Endothelial cell of umbilical vein (primary cell): ENCODE measurements at regions of chr4 and their contacts with region 1.

Region 1: DNA sequence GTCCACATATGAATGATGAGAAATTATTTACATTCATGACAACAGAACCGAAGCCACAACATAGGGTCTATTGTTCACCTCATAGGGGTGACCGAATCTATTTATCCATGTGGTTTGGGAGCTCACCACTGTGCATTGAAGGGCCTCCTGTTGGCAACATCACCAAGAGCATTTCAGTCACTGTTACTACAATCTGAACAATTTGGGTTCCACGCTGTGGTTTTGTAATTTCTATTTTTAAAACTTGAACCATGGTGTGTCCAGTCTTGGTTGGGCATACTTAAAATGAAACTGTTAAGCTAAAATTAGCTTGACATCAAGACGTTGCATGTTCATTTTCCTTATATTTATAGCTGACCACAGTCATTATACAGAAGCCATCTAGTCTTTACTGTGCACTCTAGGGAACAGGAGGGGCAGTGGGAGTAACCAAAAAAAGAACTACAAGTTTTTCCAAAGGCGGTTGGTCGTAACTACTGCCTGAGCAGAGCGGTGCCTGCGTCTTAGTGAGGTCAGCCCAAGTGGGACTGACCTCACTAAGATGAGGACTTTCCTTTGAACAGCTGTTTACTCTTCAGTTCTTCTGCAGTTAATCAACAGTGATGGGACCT is 192.1 kb downstream of the SPRY1 start:
- DNase-seq: no peak
- H3K4me3 ChIP-seq: no peak overlapping the region
- H3K27ac ChIP-seq: no peak overlapping the region
- H3K4me1 ChIP-seq: peaks cover 14% of the 10 kb centered on the region
- H3K27me3 ChIP-seq: no peaks in the 10 kb centered on the region
- CTCF ChIP-seq: no peak
- POLR2A ChIP-seq: no peak

Region 2: DNA sequence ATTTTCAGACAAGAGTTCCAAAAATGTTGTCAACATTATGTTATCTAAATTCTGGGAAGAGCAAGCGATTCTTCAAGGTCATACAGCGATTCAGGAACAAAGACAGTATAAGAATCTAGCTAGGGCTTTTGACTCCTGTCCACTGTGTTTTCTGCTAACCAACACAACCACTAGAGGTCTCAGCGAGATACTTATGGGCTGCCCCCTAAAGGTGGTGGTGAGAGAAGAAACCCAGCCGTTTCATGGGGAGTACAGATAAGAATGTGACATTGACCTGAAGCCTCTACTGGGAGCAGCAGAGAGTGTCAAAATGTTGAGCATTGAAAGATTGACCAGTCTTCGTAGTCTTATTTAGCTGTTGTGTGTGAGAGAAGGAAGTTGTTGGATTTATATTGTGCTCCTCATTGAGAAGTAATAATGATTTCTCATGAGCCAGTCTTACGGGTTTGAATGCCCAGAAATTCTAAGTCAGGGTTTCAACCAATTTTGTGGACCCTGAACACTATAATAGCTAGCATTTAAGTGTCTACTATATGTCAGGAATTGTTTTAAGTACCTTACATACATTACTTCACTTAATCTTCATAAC is 23.9 kb before region 1 on chr4:
- CTCF ChIA-PET with region 1: interaction called, 11 read pairs
- POLR2A ChIA-PET with region 1: no interaction called
- dilution Hi-C with region 1: no loop called
- intact Hi-C with region 1: no loop called
- DNase-seq: peak; percentile 74
- H3K4me3 ChIP-seq: no peak overlapping the region
- H3K27ac ChIP-seq: no peak overlapping the region
- H3K4me1 ChIP-seq: peaks cover 5% of the 10 kb centered on the region
- H3K27me3 ChIP-seq: peaks cover 2 to 5% of the 10 kb centered on the region in 2 experiments
- CTCF ChIP-seq: peak; percentile 81 to 84
- POLR2A ChIP-seq: no peak